Activated B cell treated with CpG ODN at 0.5 μM for 24 hours (primary cell): ENCODE measurements at regions of chr19 and their contacts with region 1.

Region 1: GRCh38 chr19:1896508-1896907 is 8.7 kb upstream of the ADAT3 start:
- DNase-seq: no peak
- ATAC-seq: no peak
- H3K4me3 Mint-ChIP-seq: peak overlapping the region; percentile 84
- H3K27ac Mint-ChIP-seq: peak overlapping the region; percentile 97
- H3K4me1 Mint-ChIP-seq: peaks cover 45% of the 10 kb centered on the region
- H3K27me3 Mint-ChIP-seq: no peaks in the 10 kb centered on the region
- CTCF ChIP-seq: no peak

Region 2: GRCh38 chr19:1825909-1826556 is 70.5 kb before region 1 on chr19:
- CTCF ChIA-PET with region 1: no interaction called
- POLR2A ChIA-PET with region 1: no interaction called
- intact Hi-C with region 1: no loop called
- DNase-seq: peak; percentile 72
- ATAC-seq: peak; percentile 93
- H3K4me3 Mint-ChIP-seq: no peak overlapping the region
- H3K27ac Mint-ChIP-seq: no peak overlapping the region
- H3K4me1 Mint-ChIP-seq: peaks cover 3% of the 10 kb centered on the region
- H3K27me3 Mint-ChIP-seq: no peaks in the 10 kb centered on the region
- CTCF ChIP-seq: no peak

Region 3: DNA sequence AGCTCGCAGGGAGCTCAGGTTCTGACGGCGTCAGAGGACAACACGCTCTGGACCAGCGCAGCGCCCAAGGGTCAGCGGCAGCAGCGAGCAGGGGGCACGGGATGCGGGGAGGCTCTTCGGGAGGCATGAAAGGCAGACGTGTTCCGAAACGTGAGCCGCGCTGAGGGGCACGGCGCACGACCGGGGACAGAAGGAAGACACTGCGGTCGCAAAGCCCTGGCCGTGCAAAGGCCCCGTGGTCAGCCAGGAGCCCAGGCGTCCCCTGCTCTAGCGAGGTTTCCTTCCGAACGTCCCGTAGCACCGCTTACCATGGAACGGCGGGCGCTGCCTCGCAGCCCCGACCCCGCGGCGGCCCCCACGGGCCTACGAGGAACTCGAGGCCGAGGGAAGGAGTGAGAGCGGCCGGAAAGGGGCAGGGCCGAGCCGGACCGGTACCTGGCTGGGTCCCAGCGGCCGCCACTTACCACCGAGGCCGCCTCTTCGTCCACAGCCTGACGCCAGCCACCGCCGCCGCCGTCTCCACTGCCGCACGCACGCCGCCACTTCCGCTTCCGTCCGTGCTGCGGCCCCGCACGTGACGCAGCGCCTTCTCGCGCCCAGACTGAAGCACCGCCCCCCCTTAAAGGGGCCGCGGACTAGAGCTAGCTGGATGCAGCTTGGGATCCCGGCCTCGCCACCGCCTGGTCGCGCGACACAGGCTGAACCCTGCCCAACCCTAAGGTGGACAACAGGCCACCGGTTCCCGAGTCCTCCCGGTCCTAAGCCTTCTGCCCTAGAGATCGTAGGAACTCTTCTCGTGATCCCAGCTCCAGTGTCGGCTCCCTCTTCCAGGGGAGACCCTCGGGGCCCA is 20.6 kb before region 1 on chr19:
- CTCF ChIA-PET with region 1: interaction called, 4 read pairs
- POLR2A ChIA-PET with region 1: interaction called, 26 read pairs
- intact Hi-C with region 1: no loop called
- DNase-seq: peak; percentile 86
- ATAC-seq: peak; percentile 94
- H3K4me3 Mint-ChIP-seq: peak overlapping the region; percentile 97
- H3K27ac Mint-ChIP-seq: peak overlapping the region; percentile 92
- H3K4me1 Mint-ChIP-seq: peaks cover 34% of the 10 kb centered on the region
- H3K27me3 Mint-ChIP-seq: no peaks in the 10 kb centered on the region
- CTCF ChIP-seq: no peak

Region 4: DNA sequence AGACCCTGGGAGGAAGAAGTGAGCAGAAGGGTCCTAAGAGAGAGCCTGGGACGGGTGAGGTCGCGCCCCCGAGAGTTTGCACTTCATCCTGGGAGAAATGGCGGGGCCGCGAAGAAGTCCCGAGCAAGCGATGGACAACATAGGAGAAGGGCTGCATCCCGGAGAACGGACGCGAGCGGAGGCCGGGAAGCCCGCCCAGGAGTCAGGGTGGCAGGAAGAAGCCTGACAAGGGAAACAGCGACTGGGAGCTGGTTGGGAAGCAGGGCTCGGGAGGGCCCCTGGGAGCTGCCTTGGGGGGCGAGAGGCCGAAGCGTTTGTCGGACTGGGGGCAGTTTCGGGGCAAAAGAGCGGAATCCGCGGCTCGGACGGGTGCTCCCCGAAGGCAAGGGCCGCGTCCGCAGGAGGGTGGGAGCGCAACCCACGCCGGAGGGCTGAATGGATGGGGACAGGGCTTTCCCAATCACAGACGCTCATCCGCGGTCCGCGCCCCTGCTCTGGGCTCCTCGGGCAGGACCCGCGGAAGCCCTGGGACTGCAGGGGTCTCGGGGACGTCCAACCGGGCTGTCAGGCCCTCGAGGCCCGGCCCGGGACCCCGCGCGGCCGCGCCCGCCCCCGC is 11.7 kb before region 1 on chr19:
- CTCF ChIA-PET with region 1: interaction called, 5 read pairs
- POLR2A ChIA-PET with region 1: interaction called, 25 read pairs
- intact Hi-C with region 1: loop called (anchors 1 kb)
- DNase-seq: no peak
- ATAC-seq: peak; percentile 8
- H3K4me3 Mint-ChIP-seq: peak overlapping the region; percentile 93
- H3K27ac Mint-ChIP-seq: peak overlapping the region; percentile 82
- H3K4me1 Mint-ChIP-seq: peaks cover 41% of the 10 kb centered on the region
- H3K27me3 Mint-ChIP-seq: no peaks in the 10 kb centered on the region
- CTCF ChIP-seq: no peak

Region 5: DNA sequence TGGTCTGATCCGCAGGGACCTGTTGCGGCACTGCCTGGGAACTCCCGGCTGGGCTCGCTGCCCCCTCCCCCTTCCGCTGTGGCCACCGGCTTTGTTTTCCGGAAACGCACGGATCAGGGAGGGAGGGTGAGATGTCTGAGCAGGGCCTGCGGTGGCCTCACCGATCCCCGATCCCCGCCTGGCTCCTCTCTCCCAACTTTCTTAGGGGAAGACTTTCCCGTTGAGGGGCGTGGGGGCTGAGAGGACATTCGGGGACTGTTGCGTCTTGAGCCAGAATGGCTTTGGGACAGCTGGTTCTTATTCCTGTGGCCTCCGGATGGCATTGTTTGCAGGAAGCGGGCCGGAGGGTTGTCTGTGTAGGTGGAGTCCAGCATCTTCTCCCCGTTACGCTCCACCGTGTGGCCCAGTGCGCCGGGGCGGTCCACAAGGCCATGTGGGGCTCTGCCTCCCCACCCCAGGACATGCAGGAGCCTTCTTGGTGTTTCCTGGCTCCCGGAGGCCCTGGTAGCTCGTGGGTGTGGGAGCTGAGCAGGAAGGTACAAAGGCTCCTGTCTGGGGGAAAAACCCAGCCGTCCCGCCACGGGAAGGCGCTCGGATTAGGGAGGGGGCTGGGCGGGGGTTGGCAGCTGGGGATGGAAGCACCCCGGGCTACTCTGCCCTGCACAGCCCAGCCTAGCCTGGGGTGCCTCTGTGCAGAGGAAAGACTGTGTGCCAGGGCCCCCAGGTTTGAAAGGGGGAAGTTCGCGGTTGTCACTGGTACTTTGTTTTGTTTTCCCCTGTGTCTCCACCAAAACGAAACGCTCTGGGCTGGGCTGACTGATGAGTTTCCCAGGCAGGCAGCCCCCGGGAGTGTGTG is 45.8 kb after region 1 on chr19:
- CTCF ChIA-PET with region 1: no interaction called
- POLR2A ChIA-PET with region 1: no interaction called
- intact Hi-C with region 1: loop called (anchors 2 kb)
- DNase-seq: peak; percentile 69
- ATAC-seq: peak; percentile 53
- H3K4me3 Mint-ChIP-seq: peak overlapping the region; percentile 91
- H3K27ac Mint-ChIP-seq: peak overlapping the region; percentile 96
- H3K4me1 Mint-ChIP-seq: peaks cover 46% of the 10 kb centered on the region
- H3K27me3 Mint-ChIP-seq: no peaks in the 10 kb centered on the region
- CTCF ChIP-seq: no peak